Dendritic cell treated with granulocyte-macrophage colony-stimulating factor and Interleukin-4, amounts not matched to agents 40 ng/mL and 50 ng/mL, for 4 days (primary cell): ENCODE measurements at regions of chr1 and their contacts with region 1.

Region 1: DNA sequence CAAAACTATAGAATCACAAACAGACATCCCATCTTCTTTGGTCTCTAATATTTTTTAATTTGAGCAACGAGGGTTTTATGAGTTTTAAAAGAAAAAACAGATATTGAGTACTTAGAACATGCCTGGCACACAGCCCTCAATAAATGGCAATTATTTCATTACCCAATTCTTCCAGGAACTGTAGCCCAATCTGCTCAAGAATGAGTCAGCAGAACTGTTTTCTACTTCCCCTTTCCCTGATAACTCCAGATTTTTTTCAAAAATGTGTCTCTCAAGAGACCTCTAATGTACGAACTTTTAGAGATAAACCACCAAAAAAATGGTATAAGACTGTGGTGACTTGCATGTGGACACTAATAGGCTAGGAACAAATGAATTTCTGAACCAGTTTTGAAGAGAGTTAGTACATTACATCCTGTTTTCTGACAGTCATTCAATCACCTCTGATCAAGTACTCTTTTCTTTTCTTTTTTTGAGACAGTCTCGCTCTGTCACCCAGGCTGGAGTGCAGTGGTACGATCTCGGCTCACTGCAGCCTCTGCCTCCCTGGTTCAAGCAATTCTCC is 11.5 kb downstream of the ABL2 start:
- H3K4me3 Mint-ChIP-seq: peak overlapping the region; percentile 60
- H3K27ac Mint-ChIP-seq: peak overlapping the region; percentile 95
- H3K4me1 Mint-ChIP-seq: peaks cover 70% of the 10 kb centered on the region
- H3K27me3 Mint-ChIP-seq: no peaks in the 10 kb centered on the region

Region 2: GRCh38 chr1:179205284-179205683 is 12.7 kb before region 1 on chr1:
- intact Hi-C with region 1: loop called (anchors 2 kb)
- H3K4me3 Mint-ChIP-seq: peak overlapping the region; percentile 32
- H3K27ac Mint-ChIP-seq: peak overlapping the region; percentile 82
- H3K4me1 Mint-ChIP-seq: peaks cover 73% of the 10 kb centered on the region
- H3K27me3 Mint-ChIP-seq: no peaks in the 10 kb centered on the region